PC-3 (cell line): ENCODE measurements at regions of chr5 and their contacts with region 1.

Region 1: DNA sequence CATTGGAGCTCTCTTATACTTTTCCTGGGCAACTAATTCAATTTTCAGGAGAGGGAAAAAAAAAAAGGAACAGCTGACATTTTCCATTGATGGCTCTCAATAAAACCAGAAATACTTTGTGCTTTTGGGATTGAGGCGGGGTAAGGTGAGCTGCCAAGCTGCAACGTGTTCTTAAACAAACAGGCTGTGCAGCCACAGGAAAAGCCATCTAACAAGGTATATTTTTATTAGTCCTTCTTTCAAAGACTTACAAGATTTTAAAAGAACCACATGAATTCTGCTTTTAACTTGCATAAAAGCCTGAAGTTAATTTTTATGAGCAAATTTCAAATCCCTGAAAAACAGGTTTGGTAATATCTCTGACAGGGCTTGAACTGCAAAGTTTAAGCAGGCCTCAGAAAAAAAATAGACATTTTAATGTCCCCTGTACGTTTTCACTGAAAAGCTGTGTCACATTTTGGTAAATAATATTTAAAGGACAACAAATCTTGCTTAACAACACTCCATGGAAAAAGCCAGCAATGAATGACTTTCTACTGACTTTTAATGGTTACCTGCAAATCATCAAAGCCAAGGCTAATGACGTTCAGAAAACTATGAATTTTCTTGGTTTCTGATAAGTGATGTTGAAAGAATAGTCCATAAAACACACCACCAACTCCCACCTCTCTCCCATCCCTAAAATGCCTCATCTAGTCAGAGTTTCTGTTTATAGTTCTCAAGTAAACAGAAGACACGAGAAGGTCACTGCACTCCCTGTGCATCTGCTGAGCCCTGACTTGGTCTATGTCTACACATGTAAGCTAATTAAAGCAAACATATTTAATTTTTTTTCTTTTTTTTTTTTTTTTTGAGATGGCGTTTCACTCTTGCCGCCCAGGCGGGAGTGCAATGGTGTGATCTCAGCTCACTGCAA is 433.6 kb downstream of the PIK3R1 start:
- DNase-seq: peak; percentile 50
- ATAC-seq: peak; percentile 18; the same call in 1 of the 2 replicates
- H3K4me3 ChIP-seq: no peak overlapping the region
- H3K27ac ChIP-seq: 0 out of 2 replicates have a peak overlapping the region, but pooled peaks have one; percentile 18
- H3K4me1 ChIP-seq: peaks cover 14% of the 10 kb centered on the region
- H3K27me3 ChIP-seq: no peaks in the 10 kb centered on the region
- CTCF ChIP-seq: no peak

Region 2: DNA sequence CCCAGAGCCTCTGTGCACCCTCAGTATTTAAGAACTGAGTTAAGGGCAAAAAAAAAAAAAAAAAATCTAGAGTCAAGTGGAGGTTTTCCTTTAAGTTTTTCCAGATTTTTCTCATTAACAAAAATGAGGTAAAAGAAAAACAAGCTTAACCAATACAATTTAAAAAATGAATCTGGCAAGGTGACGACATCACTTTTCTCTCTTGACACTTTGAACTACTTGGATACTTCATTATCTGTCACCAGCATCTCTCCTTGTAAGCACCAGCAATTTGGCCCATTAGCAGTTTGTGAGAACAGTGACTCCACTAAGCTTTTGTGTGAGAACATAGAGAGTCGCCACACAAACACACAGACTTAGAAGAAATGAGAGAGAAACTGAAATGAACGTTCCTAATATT is 98.9 kb after region 1 on chr5:
- CTCF ChIA-PET with region 1: no interaction called
- POLR2A ChIA-PET with region 1: interaction called, 16 read pairs
- intact Hi-C with region 1: no loop called
- DNase-seq: no peak
- ATAC-seq: no peak
- H3K4me3 ChIP-seq: no peak overlapping the region
- H3K27ac ChIP-seq: no peak overlapping the region
- H3K4me1 ChIP-seq: no peaks in the 10 kb centered on the region
- H3K27me3 ChIP-seq: peaks cover 16% of the 10 kb centered on the region; the same call in 1 of the 2 replicates
- CTCF ChIP-seq: no peak